BJ (cell line): ENCODE measurements at regions of chr15 and their contacts with region 1.

Region 1: DNA sequence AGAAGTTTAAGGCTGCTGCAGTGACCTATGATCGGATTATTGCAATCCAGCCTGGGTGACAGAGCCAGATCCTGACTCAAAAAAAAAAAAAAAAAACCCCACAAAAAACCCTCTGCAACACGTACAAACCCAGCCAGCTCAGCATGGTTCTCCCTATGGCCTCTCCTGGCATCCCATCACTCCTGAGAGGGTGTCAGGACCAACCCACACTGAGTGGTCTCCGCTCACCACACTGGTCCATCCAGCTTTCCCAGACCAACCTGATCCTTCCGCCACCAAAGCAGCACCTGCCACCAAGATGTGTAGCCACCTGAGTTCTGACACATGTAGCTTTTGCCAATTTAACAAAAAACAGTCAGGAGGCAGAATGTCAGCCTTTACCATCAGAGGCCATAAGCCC is 40.3 kb downstream of the DAPK2 start:
- DNase-seq: no peak
- H3K4me3 ChIP-seq: no peak overlapping the region
- H3K27me3 ChIP-seq: no peaks in the 10 kb centered on the region
- CTCF ChIP-seq: no peak

Region 2: GRCh38 chr15:63442080-63442479 is 563.9 kb before region 1 on chr15:
- CTCF ChIA-PET with region 1: no interaction called
- POLR2A ChIA-PET with region 1: interaction called, 12 read pairs
- DNase-seq: no peak
- H3K4me3 ChIP-seq: no peak overlapping the region
- H3K27me3 ChIP-seq: no peaks in the 10 kb centered on the region; the same call in 1 of the 2 replicates
- CTCF ChIP-seq: no peak

Region 3: DNA sequence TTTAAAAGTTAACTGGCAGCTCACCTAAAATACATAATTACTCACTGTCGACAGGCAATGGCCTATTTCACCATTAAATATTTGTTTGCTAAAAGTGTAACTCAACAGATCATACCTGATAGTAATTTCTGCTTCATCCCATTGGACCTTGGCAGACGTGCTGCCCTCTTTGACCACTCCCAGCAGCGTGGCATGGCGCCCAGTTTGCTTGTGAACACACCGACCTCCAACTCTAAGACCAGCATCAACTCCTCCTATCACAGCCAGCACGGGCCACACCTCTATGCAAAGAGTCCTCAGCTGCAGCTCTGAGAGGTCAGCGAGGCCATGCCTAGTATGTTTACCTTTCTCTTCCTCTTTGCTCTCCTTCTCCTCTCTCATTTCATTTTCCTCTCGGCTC is 328.2 kb before region 1 on chr15:
- CTCF ChIA-PET with region 1: no interaction called
- POLR2A ChIA-PET with region 1: no interaction called
- DNase-seq: no peak
- H3K4me3 ChIP-seq: no peak overlapping the region
- H3K27me3 ChIP-seq: no peaks in the 10 kb centered on the region
- CTCF ChIP-seq: no peak